IMR-90 (cell line): ENCODE measurements at regions of chr3 and their contacts with region 1.

Region 1: DNA sequence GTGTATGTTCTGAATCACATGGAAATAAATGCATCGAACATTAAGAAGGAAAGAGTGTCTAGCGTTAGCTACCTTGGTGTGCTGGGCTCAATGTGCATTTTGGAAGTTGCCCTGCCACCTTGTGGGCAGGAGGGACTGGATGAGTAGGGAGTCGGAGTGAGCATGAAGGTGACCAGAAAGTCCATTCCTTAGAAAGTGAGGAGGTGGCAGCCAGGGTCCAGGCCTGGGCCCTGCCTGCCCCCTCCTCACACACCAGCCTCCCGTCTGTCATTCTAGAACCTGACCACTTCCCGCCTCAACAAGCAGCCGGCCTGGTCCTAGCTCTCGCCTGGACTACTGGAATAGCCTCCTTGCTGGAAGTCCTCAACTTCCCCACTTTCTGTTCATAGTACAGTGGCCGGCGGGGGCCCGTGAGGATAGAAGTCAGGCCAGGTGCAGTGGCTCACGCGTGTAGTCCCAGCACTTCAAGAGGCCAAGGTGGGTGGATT is 10.2 kb upstream of the GATA2 start:
- DNase-seq: no peak
- ATAC-seq: no peak
- H3K4me3 ChIP-seq: no peak overlapping the region
- H3K27ac ChIP-seq: no peak overlapping the region
- H3K4me1 ChIP-seq: no peaks in the 10 kb centered on the region
- H3K27me3 ChIP-seq: peaks cover 3% of the 10 kb centered on the region; the same call in 1 of the 2 replicates
- CTCF ChIP-seq: 0 out of 2 replicates have a peak, but pooled peaks have one; percentile 16
- POLR2A ChIP-seq: no peak
- RAD21 ChIP-seq: peak; percentile 7; the same call in 1 of the 2 replicates

Region 2: DNA sequence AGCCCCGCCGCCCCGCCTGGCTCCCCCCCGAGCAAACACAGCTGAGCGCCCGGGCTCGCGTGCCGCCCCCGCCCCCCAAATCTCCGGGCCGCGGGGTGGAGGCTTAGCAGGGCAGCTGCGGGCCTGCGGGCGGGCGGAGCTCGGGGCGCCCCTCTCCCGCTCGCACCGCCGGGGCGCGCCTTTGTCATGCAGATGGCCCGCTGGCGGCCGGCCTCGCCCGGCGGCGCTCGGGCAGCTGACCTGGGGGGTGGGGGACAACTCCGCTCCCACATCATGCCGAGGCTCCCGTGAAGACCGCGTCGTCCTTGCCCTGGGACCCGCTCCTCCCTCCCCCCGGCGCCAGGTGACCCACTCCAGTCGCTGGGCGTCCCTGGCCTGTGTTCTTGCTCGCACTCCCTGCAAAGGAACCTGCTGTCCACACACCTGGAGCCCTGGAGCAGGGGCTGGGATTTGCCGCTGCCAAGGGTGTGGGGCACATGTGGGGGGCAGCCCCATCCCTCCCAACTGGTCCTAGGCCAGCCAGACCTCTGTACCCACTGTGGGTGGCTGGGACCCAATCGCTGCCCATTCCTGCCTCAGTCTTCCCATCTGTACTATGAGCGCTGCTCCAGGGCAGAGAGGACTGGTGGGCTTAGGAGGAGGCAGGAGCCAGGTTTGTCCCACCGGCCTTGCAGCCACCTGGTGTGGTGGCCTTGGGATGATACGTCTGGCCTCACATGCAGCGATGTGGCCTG is 70.1 kb before region 1 on chr3:
- CTCF ChIA-PET with region 1: no interaction called
- POLR2A ChIA-PET with region 1: no interaction called
- dilution Hi-C with region 1: no loop called
- in situ Hi-C with region 1: loop called (anchors 5 kb)
- intact Hi-C with region 1: no loop called
- DNase-seq: no peak
- ATAC-seq: peak; percentile 65
- H3K4me3 ChIP-seq: no peak overlapping the region; the same call in 1 of the 2 replicates
- H3K27ac ChIP-seq: no peak overlapping the region
- H3K4me1 ChIP-seq: peaks cover 2% of the 10 kb centered on the region; the same call in 1 of the 2 replicates
- H3K27me3 ChIP-seq: peaks cover 70% of the 10 kb centered on the region
- CTCF ChIP-seq: no peak
- POLR2A ChIP-seq: no peak
- RAD21 ChIP-seq: 0 out of 2 replicates have a peak, but pooled peaks have one; percentile 9

Region 3: DNA sequence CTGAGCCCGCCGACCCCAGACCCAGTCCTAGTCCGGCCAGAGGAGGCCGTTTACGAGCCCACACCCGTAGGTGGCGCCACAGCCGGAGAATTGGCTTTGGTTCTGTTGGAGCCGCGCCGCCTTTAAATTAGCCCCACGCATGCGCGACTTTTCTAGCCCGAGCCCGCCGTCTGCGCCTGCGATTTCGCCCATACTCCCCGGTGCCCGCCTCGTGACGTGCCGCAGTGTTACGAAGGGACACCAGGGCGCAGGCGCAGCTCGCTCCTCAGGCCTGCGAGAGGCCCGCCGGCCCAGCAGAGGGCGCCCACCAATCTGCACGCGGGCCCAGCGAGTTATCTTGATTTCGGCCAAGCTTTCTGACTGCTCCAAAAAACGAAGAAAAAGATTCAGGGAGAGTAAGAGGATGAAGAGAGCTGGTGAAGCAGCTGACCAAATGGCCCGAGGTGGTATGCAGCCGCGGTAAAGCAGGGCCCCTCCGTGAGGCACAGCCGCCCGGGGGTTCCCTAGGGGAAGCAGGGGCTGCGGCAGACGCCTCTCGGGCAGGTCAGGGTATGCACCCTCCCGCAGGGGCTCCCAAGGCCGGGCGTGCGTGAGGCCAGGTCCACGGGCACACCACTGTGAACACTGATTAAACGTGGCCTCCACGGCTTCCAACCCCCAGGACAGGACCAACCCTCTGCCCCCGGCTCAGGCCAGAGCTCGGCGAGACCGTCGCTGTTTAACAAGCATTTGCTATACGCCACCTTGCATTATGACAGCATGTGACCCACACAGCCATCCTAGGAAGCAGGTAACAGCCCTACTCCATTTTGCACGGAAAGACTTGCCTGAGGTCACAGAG is 114.6 kb after region 1 on chr3:
- CTCF ChIA-PET with region 1: no interaction called
- POLR2A ChIA-PET with region 1: no interaction called
- dilution Hi-C with region 1: no loop called
- in situ Hi-C with region 1: no loop called
- intact Hi-C with region 1: no loop called
- DNase-seq: peak; percentile 93
- ATAC-seq: peak; percentile 97
- H3K4me3 ChIP-seq: peak overlapping the region; percentile 66
- H3K27ac ChIP-seq: peak overlapping the region; percentile 78
- H3K4me1 ChIP-seq: peaks cover 14% of the 10 kb centered on the region
- H3K27me3 ChIP-seq: no peaks in the 10 kb centered on the region
- CTCF ChIP-seq: peak; percentile 82
- POLR2A ChIP-seq: no peak
- RAD21 ChIP-seq: peak; percentile 62

Region 4: GRCh38 chr3:128849911-128850455 is 346.8 kb after region 1 on chr3:
- CTCF ChIA-PET with region 1: no interaction called
- POLR2A ChIA-PET with region 1: no interaction called
- dilution Hi-C with region 1: no loop called
- in situ Hi-C with region 1: no loop called
- intact Hi-C with region 1: no loop called
- DNase-seq: no peak
- ATAC-seq: no peak
- H3K4me3 ChIP-seq: no peak overlapping the region
- H3K27ac ChIP-seq: no peak overlapping the region
- H3K4me1 ChIP-seq: peaks cover 6% of the 10 kb centered on the region; the same call in 1 of the 2 replicates
- H3K27me3 ChIP-seq: peaks cover 1% of the 10 kb centered on the region; the same call in 1 of the 2 replicates
- CTCF ChIP-seq: 0 out of 2 replicates have a peak, but pooled peaks have one; percentile 19
- POLR2A ChIP-seq: no peak
- RAD21 ChIP-seq: peak; percentile 26; the same call in 1 of the 2 replicates